ENCODE measurements at regions of chr7 and their contacts with region 1.

Region 1: GRCh38 chr7:120792091-120792860 is 65.7 kb downstream of the TSPAN12 start:
- DNase-seq: peak; percentile 65 to 90 (median 74)
- ATAC-seq: peak; percentile 99
- H3K4me3 ChIP-seq: no peak overlapping the region
- H3K27ac ChIP-seq: no peak overlapping the region
- H3K4me1 ChIP-seq: no peaks in the 10 kb centered on the region; a peak in 1 of 5 replicates
- H3K27me3 ChIP-seq: peaks cover 0 to 8% of the 10 kb centered on the region in 2 experiments; a peak in 1 of 5 replicates
- CTCF ChIP-seq: peak; percentile 94 to 99 (median 96)
- EP300 ChIP-seq: no peak
- POLR2A ChIP-seq: no peak
- RAD21 ChIP-seq: peak; percentile 77 to 92

Region 2: GRCh38 chr7:120740348-120740747 is 51.9 kb before region 1 on chr7:
- CTCF ChIA-PET with region 1: no interaction called
- POLR2A ChIA-PET with region 1: no interaction called
- in situ Hi-C with region 1: no loop called
- intact Hi-C with region 1: no loop called
- DNase-seq: peak in 1 of 4 experiments; percentile 37
- ATAC-seq: peak; percentile 54
- H3K4me3 ChIP-seq: no peak overlapping the region
- H3K27ac ChIP-seq: no peak overlapping the region
- H3K4me1 ChIP-seq: no peaks in the 10 kb centered on the region; a peak in 1 of 5 replicates
- H3K27me3 ChIP-seq: no peaks in the 10 kb centered on the region
- CTCF ChIP-seq: no peak
- EP300 ChIP-seq: no peak
- POLR2A ChIP-seq: no peak
- RAD21 ChIP-seq: no peak

Region 3: DNA sequence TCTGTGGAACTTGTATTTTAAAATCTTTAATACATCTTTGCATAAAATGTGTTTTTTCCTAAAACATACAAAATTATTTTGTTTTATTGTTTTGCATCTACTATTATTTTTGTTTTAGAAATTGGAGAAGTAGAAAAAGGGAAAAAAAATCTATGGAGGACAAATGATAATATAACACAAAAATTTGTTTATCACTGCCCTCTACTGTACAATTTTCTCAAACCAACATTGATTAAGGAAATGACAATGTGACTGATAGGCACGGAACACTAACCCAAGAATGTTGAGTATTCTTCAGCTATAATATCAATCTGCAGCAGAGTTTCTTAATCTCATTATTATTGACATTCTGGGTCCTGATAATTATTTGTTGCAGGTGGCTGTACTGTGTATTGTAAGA is 148.8 kb after region 1 on chr7:
- CTCF ChIA-PET with region 1: interaction called, 3 read pairs
- POLR2A ChIA-PET with region 1: no interaction called
- in situ Hi-C with region 1: no loop called
- intact Hi-C with region 1: loop called (anchors 1 kb)
- DNase-seq: peak in 1 of 4 experiments; percentile 23
- ATAC-seq: peak; percentile 60
- H3K4me3 ChIP-seq: no peak overlapping the region
- H3K27ac ChIP-seq: no peak overlapping the region
- H3K4me1 ChIP-seq: no peaks in the 10 kb centered on the region
- H3K27me3 ChIP-seq: no peaks in the 10 kb centered on the region; a peak in 1 of 5 replicates
- CTCF ChIP-seq: peak in 2 of 3 experiments; percentile 18 to 58; a peak in 3 of 6 replicates
- EP300 ChIP-seq: no peak
- POLR2A ChIP-seq: no peak
- RAD21 ChIP-seq: peak; percentile 47 to 62

Region 4: GRCh38 chr7:121113288-121113687 is 321.0 kb after region 1 on chr7:
- CTCF ChIA-PET with region 1: interaction called, 24 read pairs
- POLR2A ChIA-PET with region 1: no interaction called
- in situ Hi-C with region 1: loop called (anchors 5 kb)
- intact Hi-C with region 1: loop called (anchors 5 kb)
- DNase-seq: no peak
- ATAC-seq: no peak
- H3K4me3 ChIP-seq: no peak overlapping the region
- H3K27ac ChIP-seq: no peak overlapping the region
- H3K4me1 ChIP-seq: no peaks in the 10 kb centered on the region
- H3K27me3 ChIP-seq: no peaks in the 10 kb centered on the region
- CTCF ChIP-seq: no peak
- EP300 ChIP-seq: no peak
- POLR2A ChIP-seq: no peak; the same call in 1 of the 2 replicates
- RAD21 ChIP-seq: no peak

Region 5: GRCh38 chr7:121337398-121337797 is 545.1 kb after region 1 on chr7:
- CTCF ChIA-PET with region 1: interaction called, 4 read pairs
- POLR2A ChIA-PET with region 1: no interaction called
- in situ Hi-C with region 1: no loop called
- intact Hi-C with region 1: loop called (anchors 1 kb)
- DNase-seq: peak in 1 of 4 experiments; percentile 47
- ATAC-seq: peak; percentile 89
- H3K4me3 ChIP-seq: no peak overlapping the region
- H3K27ac ChIP-seq: no peak overlapping the region
- H3K4me1 ChIP-seq: no peaks in the 10 kb centered on the region
- H3K27me3 ChIP-seq: peaks cover 0 to 15% of the 10 kb centered on the region in 2 experiments; a peak in 2 of 5 replicates
- CTCF ChIP-seq: peak; percentile 43 to 73 (median 68); a peak in 5 of 6 replicates
- EP300 ChIP-seq: no peak
- POLR2A ChIP-seq: no peak
- RAD21 ChIP-seq: peak; percentile 77 to 90

Region 6: GRCh38 chr7:121994625-121995410 is 1202.5 kb after region 1 on chr7:
- CTCF ChIA-PET with region 1: no interaction called
- POLR2A ChIA-PET with region 1: no interaction called
- in situ Hi-C with region 1: no loop called
- intact Hi-C with region 1: loop called (anchors 2 kb)
- DNase-seq: peak; percentile 53 to 73 (median 62)
- ATAC-seq: peak; percentile 97
- H3K4me3 ChIP-seq: no peak overlapping the region
- H3K27ac ChIP-seq: no peak overlapping the region
- H3K4me1 ChIP-seq: no peaks in the 10 kb centered on the region
- H3K27me3 ChIP-seq: no peaks in the 10 kb centered on the region
- CTCF ChIP-seq: peak; percentile 65 to 78 (median 69)
- EP300 ChIP-seq: no peak
- POLR2A ChIP-seq: no peak
- RAD21 ChIP-seq: peak; percentile 69 to 82